Posterior vena cava (tissue), 2 donors: ENCODE measurements at regions of chr13 and their contacts with region 1.

Region 1: DNA sequence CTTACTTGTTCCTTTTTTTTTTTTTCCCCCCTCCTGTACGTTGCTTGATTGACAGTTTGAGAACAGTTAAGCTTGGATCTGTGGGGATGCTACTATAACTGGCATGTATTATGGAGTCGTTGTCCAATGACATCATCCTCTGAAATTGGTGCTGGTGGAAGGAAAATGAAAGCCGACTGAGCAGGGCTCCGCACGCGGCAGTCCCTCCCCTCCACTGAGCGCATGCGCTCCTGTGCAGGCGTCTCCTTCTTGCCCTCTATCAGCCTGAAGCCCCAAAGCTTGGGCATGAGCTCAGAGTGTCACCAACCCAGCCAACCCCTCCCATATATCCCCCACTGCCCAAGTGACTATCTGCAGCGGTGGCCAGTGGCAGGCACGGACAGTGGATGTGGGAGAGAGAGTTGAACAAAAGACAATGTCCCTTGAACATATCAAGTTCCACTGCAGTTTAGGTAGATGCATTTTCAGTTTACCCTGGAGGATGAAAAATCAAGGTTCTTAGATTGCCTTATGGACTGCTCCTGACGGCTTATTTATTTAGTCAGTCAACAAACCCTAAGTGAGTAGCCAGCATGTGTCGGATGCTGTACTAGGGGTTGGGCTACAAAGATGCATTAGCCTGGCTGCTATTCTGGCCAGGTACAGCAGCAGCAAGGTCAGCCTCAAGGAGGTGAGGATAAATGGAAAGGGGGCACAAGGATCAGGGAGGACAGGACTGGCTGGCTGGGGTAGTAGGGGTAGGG is 20.8 kb downstream of the MBNL2 start:
- DNase-seq: no peak

Region 2: DNA sequence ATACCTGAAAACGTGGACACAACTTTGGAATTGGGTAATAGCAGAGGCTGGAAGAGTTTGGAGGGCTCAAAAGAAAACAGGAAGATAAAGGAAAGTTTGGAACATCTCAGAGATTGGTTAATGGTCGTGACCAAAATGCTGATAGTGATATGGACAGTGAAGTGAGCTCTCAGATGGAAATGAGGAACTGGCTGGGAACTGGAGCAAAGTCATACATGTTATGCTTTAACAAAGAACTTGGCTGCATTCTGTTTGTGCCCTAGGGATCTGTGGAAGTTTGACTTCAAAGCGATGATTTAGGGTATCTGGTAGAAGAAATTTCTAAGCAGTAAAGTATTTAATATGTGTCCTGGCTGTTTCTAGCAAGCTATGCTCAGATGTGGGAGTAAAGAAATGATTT is 1429.8 kb before region 1 on chr13:
- intact Hi-C with region 1: no loop called
- DNase-seq: no peak

Region 3: GRCh38 chr13:97030705-97031452 is 212.0 kb before region 1 on chr13:
- intact Hi-C with region 1: no loop called
- DNase-seq: no peak

Region 4: DNA sequence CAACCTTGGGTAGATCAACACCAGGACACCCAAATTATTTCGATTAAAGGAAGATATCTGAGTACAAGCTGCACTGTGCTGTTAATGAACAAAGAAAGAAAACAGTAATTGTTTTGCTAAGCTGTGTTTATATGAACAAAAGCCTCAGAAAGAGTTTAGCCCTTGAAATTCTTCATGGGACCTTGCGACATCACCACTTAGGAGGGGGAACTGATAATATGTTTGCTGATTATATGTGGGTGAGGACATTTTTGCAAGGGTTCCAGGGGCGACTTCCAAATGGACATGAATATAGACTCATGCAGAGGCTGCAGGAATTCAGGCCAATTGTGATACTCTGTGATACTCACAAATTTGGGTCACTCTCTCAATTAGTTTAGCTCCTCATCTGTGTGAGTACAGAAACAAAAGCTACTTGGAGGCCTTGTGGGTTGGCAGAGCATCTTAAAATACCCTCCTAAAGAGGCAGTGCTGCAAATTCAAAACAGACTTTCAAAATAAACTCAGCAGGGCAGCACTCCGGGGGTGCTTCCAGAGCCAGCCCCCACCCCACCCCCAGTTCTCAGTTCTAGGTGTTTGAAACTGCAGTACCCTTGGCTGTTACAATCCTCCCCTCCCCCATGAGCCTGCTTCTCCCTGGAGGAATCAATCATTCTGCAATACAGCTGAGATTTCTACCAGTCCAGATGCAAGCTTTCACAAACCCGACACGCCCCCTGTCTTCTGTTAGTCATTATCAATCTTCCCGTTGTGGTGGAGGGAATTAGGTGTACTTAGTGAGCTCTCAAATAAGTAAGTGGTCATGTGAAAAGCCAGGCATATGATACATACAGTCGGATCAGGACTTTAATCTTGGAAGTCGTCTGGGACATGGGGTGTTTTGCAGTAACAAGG is 117.8 kb before region 1 on chr13:
- intact Hi-C with region 1: no loop called
- DNase-seq: no peak

Region 5: GRCh38 chr13:97600458-97601080 is 357.6 kb after region 1 on chr13:
- intact Hi-C with region 1: loop called in 1 of 2 experiments (anchors 10 kb)
- DNase-seq: no peak